PC-9 (cell line): ENCODE measurements at regions of chr3 and their contacts with region 1.

Region 1: DNA sequence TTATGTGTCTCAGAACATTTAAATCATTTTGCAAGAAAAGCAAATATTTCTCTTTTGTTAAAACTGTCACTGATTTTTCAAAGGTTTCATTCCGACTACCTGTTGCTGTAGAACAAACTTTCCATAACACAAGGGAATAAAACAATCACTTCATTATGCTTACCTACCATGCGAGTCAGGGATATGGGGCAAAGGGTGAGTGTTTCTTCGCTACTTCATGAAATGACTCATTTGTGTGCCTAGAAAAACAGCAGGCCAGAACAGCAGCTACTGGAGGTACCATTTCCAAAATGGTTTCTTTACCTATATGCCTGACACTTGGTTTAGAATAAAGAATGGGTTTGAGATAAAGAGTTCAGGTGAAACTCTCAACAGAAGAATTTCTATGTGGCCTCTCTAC is 712.5 kb downstream of the PLOD2 start:
- DNase-seq: no peak
- H3K4me3 ChIP-seq: no peak overlapping the region
- H3K27ac ChIP-seq: no peak overlapping the region
- H3K4me1 ChIP-seq: no peaks in the 10 kb centered on the region
- H3K27me3 ChIP-seq: no peaks in the 10 kb centered on the region
- CTCF ChIP-seq: no peak

Region 2: DNA sequence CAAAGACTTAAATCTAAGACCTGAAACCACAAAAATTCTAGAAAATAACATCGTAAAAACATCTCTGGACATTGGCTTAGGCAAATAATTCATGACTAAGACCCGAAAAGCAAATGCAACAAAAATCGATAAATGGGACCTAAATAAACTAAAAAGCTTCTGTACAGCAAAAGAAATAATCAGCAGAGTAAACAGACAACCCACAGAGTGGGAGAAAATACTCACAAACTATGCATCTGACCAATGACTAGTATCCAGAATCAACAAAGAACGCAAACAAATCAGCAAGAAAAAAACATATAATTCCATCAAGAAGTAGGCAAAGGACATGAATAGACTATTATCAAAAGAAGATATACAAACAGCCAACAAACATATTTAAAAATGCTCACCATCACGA is 36.8 kb before region 1 on chr3:
- CTCF ChIA-PET with region 1: no interaction called
- POLR2A ChIA-PET with region 1: no interaction called
- intact Hi-C with region 1: loop called (anchors 1 kb)
- DNase-seq: no peak
- H3K4me3 ChIP-seq: no peak overlapping the region
- H3K27ac ChIP-seq: no peak overlapping the region
- H3K4me1 ChIP-seq: no peaks in the 10 kb centered on the region
- H3K27me3 ChIP-seq: no peaks in the 10 kb centered on the region
- CTCF ChIP-seq: no peak